Transverse colon (tissue), 4 donors: ENCODE measurements at regions of chr13 and their contacts with region 1.

Region 1: GRCh38 chr13:77952727-77953126 is 34.1 kb upstream of the EDNRB start:
- DNase-seq: no peak
- H3K4me3 ChIP-seq: no peak overlapping the region
- H3K27ac ChIP-seq: no peak overlapping the region
- H3K4me1 ChIP-seq: no peaks in the 10 kb centered on the region
- H3K27me3 ChIP-seq: no peaks in the 10 kb centered on the region
- CTCF ChIP-seq: no peak
- EP300 ChIP-seq: no peak
- POLR2A ChIP-seq: no peak

Region 2: DNA sequence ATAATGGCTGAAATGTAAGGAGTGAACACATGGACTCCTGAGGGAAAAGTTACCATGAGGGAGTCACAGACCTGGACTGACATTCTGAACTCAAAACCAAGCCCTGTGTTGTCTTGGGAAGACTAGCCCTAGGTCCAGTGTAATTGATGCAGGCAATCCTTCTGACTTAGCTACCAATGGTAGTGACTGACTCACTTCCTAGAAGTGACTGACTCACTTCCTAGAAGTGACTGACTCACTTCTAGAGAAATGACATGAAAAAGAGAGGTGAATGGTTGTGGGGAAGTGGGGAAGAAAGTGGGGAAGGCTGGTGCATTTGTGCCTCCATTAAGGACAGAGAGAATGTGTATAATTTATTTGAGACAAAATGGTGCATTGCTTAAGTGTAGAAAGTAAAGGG is 84.0 kb before region 1 on chr13:
- in situ Hi-C with region 1: no loop called
- intact Hi-C with region 1: no loop called
- DNase-seq: no peak
- H3K4me3 ChIP-seq: no peak overlapping the region
- H3K27ac ChIP-seq: no peak overlapping the region
- H3K4me1 ChIP-seq: no peaks in the 10 kb centered on the region
- H3K27me3 ChIP-seq: no peaks in the 10 kb centered on the region
- CTCF ChIP-seq: no peak
- EP300 ChIP-seq: no peak
- POLR2A ChIP-seq: no peak

Region 3: GRCh38 chr13:77981281-77981881 is 28.7 kb after region 1 on chr13:
- in situ Hi-C with region 1: no loop called
- intact Hi-C with region 1: loop called (anchors 1 kb)
- DNase-seq: no peak
- H3K4me3 ChIP-seq: no peak overlapping the region
- H3K27ac ChIP-seq: peak overlapping the region in 2 of 4 donors; percentile 35 to 45
- H3K4me1 ChIP-seq: peaks cover 0 to 3% (median 0%) of the 10 kb centered on the region in 4 donors
- H3K27me3 ChIP-seq: no peaks in the 10 kb centered on the region
- CTCF ChIP-seq: no peak
- EP300 ChIP-seq: no peak
- POLR2A ChIP-seq: no peak